HCT116 (cell line): ENCODE measurements at regions of chr15 and their contacts with region 1.

Region 1: GRCh38 chr15:89893696-89894455 is at the start of gene AP3S2:
- DNase-seq: peak; percentile 92
- ATAC-seq: peak; percentile 86
- H3K4me3 ChIP-seq: peak within 1 kb of the TSS; percentile 68 to 85
- H3K27ac ChIP-seq: peak within 1 kb of the TSS; percentile 74
- H3K4me1 ChIP-seq: peaks cover 0 to 16% of the 10 kb centered on the region in 2 experiments; a peak in 2 of 4 replicates
- H3K27me3 ChIP-seq: no peaks in the 10 kb centered on the region
- CTCF ChIP-seq: no peak
- POLR2A ChIP-seq: no peak
- RAD21 ChIP-seq: peak; percentile 17; the same call in 1 of the 2 replicates
- total RNA-seq, gene AP3S2: 23.3 TPM

Region 2: GRCh38 chr15:89912674-89913396 is 19.0 kb after region 1 on chr15 and contains the start of gene ARPIN:
- CTCF ChIA-PET with region 1: interaction called, 12 read pairs
- POLR2A ChIA-PET with region 1: interaction called, 4 read pairs
- RAD21 ChIA-PET with region 1: interaction called, 3 to 4 read pairs
- intact Hi-C with region 1: no loop called
- DNase-seq: no peak
- ATAC-seq: peak; percentile 69
- H3K4me3 ChIP-seq: peak within 1 kb of the TSS; percentile 63 to 77
- H3K27ac ChIP-seq: peak within 1 kb of the TSS; percentile 74
- H3K4me1 ChIP-seq: peaks cover 26 to 50% of the 10 kb centered on the region in 2 experiments
- H3K27me3 ChIP-seq: no peaks in the 10 kb centered on the region
- CTCF ChIP-seq: no peak
- POLR2A ChIP-seq: no peak
- RAD21 ChIP-seq: no peak
- total RNA-seq, gene ARPIN: 8.8 TPM

Region 3: GRCh38 chr15:89926158-89926557 is 32.3 kb after region 1 on chr15:
- CTCF ChIA-PET with region 1: no interaction called
- POLR2A ChIA-PET with region 1: no interaction called
- RAD21 ChIA-PET with region 1: no interaction called
- intact Hi-C with region 1: no loop called
- DNase-seq: no peak
- ATAC-seq: no peak
- H3K4me3 ChIP-seq: no peak overlapping the region
- H3K27ac ChIP-seq: no peak overlapping the region
- H3K4me1 ChIP-seq: no peaks in the 10 kb centered on the region
- H3K27me3 ChIP-seq: no peaks in the 10 kb centered on the region
- CTCF ChIP-seq: no peak
- POLR2A ChIP-seq: no peak
- RAD21 ChIP-seq: no peak